ENCODE measurements at regions of chr7 and their contacts with region 1.

Region 1: GRCh38 chr7:99137411-99138180 is 6.3 kb downstream of the SMURF1 start:
- DNase-seq: no peak
- ATAC-seq: peak; percentile 37
- H3K4me3 ChIP-seq: no peak overlapping the region
- H3K27ac ChIP-seq: peak overlapping the region in 1 of 4 donors; percentile 10
- H3K4me1 ChIP-seq: peaks cover 81% of the 10 kb centered on the region
- H3K27me3 ChIP-seq: no peaks in the 10 kb centered on the region
- CTCF ChIP-seq: peak in 1 of 7 experiments; percentile 26
- POLR2A ChIP-seq: no peak

Region 2: GRCh38 chr7:98956937-98957336 is 180.7 kb before region 1 on chr7:
- intact Hi-C with region 1: no loop called
- DNase-seq: no peak
- ATAC-seq: no peak
- H3K4me3 ChIP-seq: no peak overlapping the region
- H3K27ac ChIP-seq: no peak overlapping the region
- H3K4me1 ChIP-seq: no peaks in the 10 kb centered on the region
- H3K27me3 ChIP-seq: no peaks in the 10 kb centered on the region
- CTCF ChIP-seq: no peak
- POLR2A ChIP-seq: no peak

Region 3: DNA sequence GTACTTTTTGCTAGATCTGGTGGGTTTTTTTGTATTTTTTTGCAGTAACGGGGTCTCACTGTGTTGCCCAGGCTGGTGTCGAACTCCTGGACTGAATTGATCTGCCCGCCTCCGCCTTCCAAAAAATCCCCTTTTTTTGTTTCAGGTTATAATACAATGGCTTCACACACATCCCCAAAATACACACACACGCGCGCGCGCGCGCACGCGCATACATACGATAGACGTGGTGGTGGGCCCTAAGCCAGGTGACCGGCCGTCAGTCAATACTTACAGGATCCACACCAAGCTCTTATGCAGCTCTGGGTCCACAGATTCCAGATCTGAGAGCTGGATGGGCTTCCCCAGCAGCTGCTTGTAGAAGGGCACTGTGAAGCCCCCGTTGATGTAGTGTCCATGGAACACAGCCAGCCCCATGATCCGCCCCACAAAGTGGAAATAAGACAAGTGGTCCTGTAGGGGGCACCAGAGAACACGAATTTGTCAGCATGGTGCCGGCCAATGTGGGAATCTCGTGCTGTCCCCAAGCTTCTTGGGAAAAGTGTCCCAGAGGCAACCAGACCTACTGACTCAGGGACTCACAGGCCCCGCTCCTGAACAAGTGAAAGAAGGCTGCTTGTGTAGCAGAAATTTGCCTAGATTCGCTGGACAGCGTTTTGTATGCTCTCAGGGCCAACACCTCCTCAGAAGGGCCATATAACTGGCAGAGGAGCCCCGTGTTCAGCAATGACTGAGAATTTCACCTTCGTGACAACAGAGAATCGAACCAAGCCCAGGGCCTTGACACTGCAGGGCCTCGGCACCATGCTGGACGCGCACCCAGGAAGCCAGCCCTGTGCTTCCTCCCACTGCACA is 97.3 kb before region 1 on chr7:
- intact Hi-C with region 1: loop called (anchors 10 kb)
- DNase-seq: peak; percentile 86 to 90 (median 88)
- ATAC-seq: peak; percentile 81
- H3K4me3 ChIP-seq: no peak overlapping the region
- H3K27ac ChIP-seq: peak overlapping the region in 2 of 4 donors; percentile 42 to 45
- H3K4me1 ChIP-seq: peaks cover 5% of the 10 kb centered on the region
- H3K27me3 ChIP-seq: no peaks in the 10 kb centered on the region
- CTCF ChIP-seq: peak; percentile 51 to 90 (median 79)
- POLR2A ChIP-seq: no peak

Region 4: GRCh38 chr7:99083068-99083651 is 54.4 kb before region 1 on chr7:
- intact Hi-C with region 1: loop called (anchors 10 kb)
- DNase-seq: no peak
- ATAC-seq: no peak
- H3K4me3 ChIP-seq: no peak overlapping the region
- H3K27ac ChIP-seq: peak overlapping the region in 1 of 4 donors; percentile 46
- H3K4me1 ChIP-seq: peaks cover 27% of the 10 kb centered on the region
- H3K27me3 ChIP-seq: no peaks in the 10 kb centered on the region
- CTCF ChIP-seq: no peak
- POLR2A ChIP-seq: no peak

Region 5: GRCh38 chr7:99312316-99313203 is 175.0 kb after region 1 on chr7:
- intact Hi-C with region 1: loop called (anchors 10 kb)
- DNase-seq: peak; percentile 74 to 82 (median 78)
- ATAC-seq: peak; percentile 77
- H3K4me3 ChIP-seq: no peak overlapping the region
- H3K27ac ChIP-seq: no peak overlapping the region
- H3K4me1 ChIP-seq: peaks cover 3% of the 10 kb centered on the region
- H3K27me3 ChIP-seq: no peaks in the 10 kb centered on the region
- CTCF ChIP-seq: peak; percentile 84 to 99 (median 88)
- POLR2A ChIP-seq: no peak

Measured in body of pancreas (tissue), 4 donors.